ENCODE measurements at regions of chr14 and their contacts with region 1.

Region 1: GRCh38 chr14:67666750-67667449 is 7.5 kb downstream of the VTI1B start:
- DNase-seq: peak; percentile 69
- CTCF ChIP-seq: peak; percentile 67

Region 2: GRCh38 chr14:67473290-67474082 is 193.4 kb before region 1 on chr14:
- CTCF ChIA-PET with region 1: no interaction called
- POLR2A ChIA-PET with region 1: no interaction called
- DNase-seq: no peak
- CTCF ChIP-seq: no peak

Region 3: GRCh38 chr14:67589204-67589770 is 77.6 kb before region 1 on chr14:
- CTCF ChIA-PET with region 1: interaction called, 203 read pairs
- POLR2A ChIA-PET with region 1: interaction called, 3 read pairs
- DNase-seq: no peak
- CTCF ChIP-seq: no peak

Region 4: GRCh38 chr14:67599698-67600561 is 67.0 kb before region 1 on chr14 and contains the start of gene PIGH:
- CTCF ChIA-PET with region 1: interaction called, 29 read pairs
- POLR2A ChIA-PET with region 1: no interaction called
- DNase-seq: peak; percentile 95
- CTCF ChIP-seq: peak; percentile 54

Region 5: DNA sequence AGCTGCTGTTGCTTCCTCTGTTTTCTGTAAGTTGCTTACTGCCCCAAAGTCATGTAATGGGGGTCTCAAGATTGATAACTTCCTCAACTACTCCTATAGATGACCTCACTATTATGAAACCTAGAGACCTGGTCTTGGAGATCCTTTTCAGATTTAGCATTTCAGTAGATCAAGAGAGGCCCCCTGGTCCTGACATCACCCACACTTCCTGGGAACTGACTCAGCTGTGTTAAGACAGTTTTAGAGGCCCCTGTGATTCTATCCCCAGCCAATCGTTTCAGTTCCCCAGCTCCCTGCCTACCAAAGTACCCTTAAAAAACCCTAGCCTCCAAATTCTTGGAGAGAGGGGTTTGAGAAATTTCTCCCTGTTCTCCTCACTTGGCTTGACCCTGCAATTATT is 56.4 kb before region 1 on chr14:
- CTCF ChIA-PET with region 1: interaction called, 28 read pairs
- POLR2A ChIA-PET with region 1: no interaction called
- DNase-seq: no peak
- CTCF ChIP-seq: no peak

Region 6: DNA sequence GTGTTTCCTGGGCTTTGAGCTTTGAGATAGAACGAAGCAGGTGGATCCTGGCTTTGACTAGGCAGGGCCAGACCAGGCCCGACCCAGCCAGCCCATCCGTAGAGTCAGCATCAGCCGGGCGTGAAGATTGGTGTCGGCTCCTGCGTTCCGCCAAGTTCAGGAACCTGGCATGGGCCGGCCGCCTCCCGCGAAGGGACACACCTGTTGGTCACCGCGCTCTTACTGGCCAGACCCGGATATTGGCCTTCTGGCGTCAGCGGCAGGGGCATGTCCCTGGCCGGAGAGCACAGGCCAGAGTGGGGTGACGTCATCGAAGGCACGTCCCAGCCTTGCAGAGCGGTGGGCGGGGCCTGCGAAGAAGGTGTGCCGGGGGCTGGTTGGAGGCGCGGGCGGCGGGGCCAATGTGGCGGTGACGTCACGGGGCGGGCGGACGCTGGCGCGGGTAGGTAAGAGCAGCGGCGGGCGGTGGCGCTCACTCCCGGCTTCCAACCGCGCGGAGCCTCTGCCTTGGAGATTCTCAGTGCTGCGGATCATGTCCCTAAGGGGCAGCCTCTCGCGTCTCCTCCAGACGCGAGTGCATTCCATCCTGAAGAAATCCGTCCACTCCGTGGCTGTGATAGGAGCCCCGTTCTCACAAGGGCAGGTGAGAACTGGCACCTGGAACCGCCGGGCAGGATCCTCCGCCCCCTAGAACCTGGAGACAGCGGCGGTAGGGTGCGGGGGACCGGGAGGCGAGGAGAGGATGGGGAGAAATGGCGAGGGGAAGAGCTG is 47.3 kb before region 1 on chr14 and contains the start of gene ARG2:
- CTCF ChIA-PET with region 1: interaction called, 37 read pairs
- POLR2A ChIA-PET with region 1: no interaction called
- DNase-seq: peak; percentile 97
- CTCF ChIP-seq: peak; percentile 7

Region 7: GRCh38 chr14:67644428-67644827 is 22.5 kb before region 1 on chr14:
- CTCF ChIA-PET with region 1: interaction called, 29 read pairs
- POLR2A ChIA-PET with region 1: no interaction called
- DNase-seq: no peak
- CTCF ChIP-seq: no peak

Region 8: DNA sequence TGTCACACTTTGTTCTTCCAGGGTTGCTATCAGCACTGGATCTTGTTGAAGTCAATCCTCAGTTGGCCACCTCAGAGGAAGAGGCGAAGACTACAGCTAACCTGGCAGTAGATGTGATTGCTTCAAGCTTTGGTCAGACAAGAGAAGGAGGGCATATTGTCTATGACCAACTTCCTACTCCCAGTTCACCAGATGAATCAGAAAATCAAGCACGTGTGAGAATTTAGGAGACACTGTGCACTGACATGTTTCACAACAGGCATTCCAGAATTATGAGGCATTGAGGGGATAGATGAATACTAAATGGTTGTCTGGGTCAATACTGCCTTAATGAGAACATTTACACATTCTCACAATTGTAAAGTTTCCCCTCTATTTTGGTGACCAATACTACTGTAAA is 16.2 kb before region 1 on chr14:
- CTCF ChIA-PET with region 1: interaction called, 29 read pairs
- POLR2A ChIA-PET with region 1: no interaction called
- DNase-seq: no peak
- CTCF ChIP-seq: no peak

Measured in GM10248 (cell line).